BJ (cell line): ENCODE measurements at regions of chr15 and their contacts with region 1.

Region 1: GRCh38 chr15:40290918-40291574 is 8.2 kb upstream of the ANKRD63 start:
- DNase-seq: no peak
- H3K4me3 ChIP-seq: peak overlapping the region; percentile 27
- H3K27me3 ChIP-seq: peaks cover 16% of the 10 kb centered on the region
- CTCF ChIP-seq: no peak

Region 2: DNA sequence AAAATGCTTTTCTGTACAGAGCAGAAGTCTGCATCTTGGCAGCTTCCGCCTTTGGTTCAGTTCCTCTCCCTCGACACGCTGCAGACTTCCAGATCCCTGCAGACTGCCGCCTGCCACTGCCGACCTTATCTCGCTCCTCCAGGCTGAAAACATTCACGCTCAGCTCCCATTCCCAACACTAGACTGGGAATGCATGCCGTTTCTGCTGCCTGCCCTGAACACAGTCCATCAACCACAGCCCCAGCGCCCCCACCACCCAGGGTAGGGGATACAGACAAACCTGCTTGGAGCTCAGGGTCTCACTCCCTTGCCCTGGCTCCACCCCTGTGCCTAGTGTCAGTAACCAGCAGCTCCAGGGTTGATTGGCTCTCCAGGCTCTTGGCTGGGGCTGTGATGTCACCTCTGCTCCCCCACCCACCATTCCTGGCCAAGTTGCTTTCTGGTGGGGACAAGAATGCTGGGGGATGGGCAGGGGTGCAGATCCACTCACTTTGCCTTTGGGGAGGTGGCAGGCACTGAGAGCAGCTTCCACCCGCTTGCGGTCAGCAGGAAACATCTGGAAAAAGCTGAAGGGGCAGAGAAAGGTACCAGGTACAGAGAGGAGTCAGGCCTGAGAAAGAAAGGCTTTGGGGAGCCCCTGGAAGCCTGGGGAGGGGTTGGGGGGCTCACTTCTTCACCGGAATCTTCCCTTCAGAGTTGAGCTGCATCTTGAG is 10.6 kb after region 1 on chr15:
- CTCF ChIA-PET with region 1: interaction called, 12 read pairs
- POLR2A ChIA-PET with region 1: no interaction called
- DNase-seq: no peak
- H3K4me3 ChIP-seq: no peak overlapping the region
- H3K27me3 ChIP-seq: peaks cover 21% of the 10 kb centered on the region
- CTCF ChIP-seq: no peak

Region 3: DNA sequence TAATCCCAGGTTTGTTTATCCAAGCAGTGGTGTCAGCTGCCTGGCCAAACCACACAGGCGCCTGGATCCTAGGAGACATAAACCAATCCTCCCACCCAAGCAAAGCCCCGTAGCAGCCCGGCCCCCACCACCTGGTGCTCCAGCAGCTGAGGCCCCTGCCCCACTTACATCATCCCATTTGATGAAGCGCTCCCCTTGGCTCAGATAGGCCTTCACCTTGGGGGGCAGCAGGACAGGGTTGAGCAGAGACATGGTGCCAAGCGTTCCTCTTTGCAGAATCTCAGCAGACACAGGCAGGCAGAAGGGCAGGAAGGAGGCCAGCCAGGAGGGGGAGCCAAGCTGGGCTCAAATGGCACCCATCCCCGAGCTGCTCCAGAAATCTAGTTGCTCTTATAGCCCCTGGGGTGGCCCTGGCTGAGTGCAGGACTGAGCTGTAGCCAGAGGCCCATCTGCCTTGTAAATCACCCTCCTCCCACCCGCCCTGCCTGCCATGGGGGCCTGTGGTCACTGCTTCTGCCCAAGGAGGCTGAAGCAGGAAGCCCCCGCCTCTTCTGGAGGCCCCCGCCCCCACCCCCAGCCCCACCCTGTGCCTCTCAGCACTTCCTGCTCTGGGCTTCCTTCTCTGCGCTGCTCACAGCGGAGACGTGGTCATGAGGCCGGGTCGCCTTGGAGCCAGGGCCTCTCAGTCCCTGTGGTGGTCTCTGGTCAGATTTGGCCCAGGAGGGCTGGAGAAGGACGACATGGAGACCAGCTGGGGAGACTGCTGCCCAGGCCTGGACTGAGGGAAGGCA is 16.6 kb after region 1 on chr15 and contains the start of gene PLCB2:
- CTCF ChIA-PET with region 1: interaction called, 28 read pairs
- POLR2A ChIA-PET with region 1: no interaction called
- DNase-seq: no peak
- H3K4me3 ChIP-seq: no peak within 1 kb of the TSS
- H3K27me3 ChIP-seq: peaks cover 25% of the 10 kb centered on the region
- CTCF ChIP-seq: 0 out of 2 replicates have a peak, but pooled peaks have one; percentile 27
- polyA plus RNA-seq, gene PLCB2: 0.22 and 0.47 TPM in 2 replicates